ENCODE measurements at regions of chr10 and their contacts with region 1.

Region 1: DNA sequence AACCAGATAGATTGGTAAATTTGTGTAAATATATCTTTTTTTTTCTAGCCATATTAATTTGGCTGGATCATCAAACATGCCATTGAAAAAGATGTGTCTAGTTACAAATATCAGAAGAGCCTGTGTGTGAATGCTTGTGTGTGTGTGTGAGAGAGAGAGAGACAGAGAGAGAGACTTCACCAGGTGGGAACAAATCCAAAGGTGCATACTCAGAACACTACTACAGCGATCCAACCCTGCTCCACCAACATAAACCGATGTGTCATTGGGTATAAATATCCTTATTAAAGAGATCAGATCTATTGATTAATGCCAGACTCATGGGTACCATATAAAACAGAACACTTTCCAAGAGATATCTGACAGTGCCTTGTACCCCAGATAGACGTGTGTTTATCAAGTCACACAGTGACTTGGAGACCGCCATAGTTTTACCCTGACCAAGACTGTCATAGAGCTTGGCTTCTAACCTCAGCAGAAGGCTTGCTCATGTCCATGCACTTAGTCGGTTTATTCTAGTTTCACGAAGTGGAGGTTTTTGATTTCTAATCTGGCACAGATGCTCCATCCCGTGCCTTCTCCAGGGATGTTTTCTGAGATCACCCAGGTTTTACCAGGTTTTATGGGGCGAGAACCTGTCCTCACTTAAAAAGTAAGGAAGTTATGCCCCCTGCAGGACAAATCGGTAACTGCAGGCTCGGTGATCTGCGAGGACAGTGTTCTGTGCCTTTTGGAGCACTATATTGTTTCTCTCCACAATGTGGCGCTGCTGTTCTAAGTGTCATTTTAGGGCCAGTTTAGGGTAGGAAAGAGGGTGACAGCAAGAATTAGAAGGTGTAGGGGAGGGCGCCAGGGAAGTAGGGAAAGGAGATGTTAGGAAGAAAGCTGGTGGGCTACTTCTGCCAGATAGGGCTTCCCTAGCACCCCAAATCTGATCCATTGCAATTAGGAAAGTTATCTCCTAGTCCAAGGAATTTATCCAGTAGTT is 29.3 kb upstream of the WNT8B start:
- DNase-seq: peak; percentile 87
- H3K4me3 Mint-ChIP-seq: no peak overlapping the region
- H3K27ac Mint-ChIP-seq: no peak overlapping the region
- H3K4me1 Mint-ChIP-seq: peaks cover 12% of the 10 kb centered on the region
- H3K27me3 Mint-ChIP-seq: no peaks in the 10 kb centered on the region
- CTCF ChIP-seq: peak; percentile 86

Region 2: DNA sequence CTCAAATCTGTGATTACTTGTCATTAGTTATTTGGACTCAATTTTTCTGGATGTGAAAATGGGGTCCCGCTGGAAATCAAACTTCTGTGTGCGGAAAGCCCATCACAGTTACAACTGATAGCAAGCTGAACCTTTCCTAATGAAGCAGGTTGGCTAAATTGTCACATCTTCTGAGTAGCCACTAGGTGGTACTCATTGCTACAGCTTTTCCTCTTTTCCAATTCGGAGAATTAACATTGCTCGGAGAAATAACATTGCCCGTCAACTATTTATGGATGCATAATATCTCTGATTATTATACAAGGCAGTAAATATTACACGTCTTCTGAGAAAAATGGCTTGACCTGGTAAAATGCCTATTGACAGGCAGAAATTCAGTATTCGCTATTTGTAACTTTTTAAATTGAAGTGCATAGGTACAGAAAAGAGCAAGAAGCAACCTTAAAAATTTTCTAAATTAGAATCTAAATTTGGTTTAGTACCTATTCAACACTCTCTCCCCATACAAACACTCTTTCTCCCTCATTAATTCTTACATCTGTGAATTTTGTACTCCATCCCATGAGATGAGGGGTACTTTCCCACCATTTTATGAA is 129.7 kb before region 1 on chr10:
- CTCF ChIA-PET with region 1: no interaction called
- intact Hi-C with region 1: loop called (anchors 1 kb)
- DNase-seq: no peak
- H3K4me3 Mint-ChIP-seq: no peak overlapping the region
- H3K27ac Mint-ChIP-seq: no peak overlapping the region
- H3K4me1 Mint-ChIP-seq: peaks cover 8% of the 10 kb centered on the region
- H3K27me3 Mint-ChIP-seq: peaks cover 10% of the 10 kb centered on the region
- CTCF ChIP-seq: peak; percentile 42

Region 3: DNA sequence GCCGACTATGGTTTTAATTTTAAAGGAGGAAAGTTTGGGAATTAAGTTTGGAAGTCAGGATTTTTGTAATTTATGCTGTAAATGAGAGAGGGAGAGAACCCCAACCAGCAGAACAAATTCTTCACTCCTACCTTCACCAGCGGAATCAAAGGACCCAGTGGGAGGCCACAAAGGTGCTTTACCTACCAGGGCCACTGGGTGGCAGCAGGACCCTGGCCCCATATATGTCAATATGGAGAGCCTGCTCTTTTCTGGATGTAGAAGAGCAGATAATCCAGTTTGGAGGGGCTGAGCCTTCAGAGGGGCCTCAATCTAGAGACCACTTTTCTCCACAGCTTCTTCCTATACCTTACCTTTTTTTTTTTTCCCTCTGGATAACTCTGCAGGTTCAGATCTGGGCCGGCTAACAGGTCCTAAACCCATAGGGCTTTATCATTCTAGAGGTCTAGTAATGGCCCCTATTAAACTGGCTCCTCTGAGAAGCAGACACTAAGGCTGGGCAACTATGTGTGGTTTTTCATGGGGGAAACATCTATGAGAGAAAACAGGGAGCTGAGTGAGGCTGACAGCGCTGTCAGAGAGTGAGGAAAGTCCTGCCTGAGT is 95.0 kb before region 1 on chr10:
- CTCF ChIA-PET with region 1: interaction called, 6 read pairs
- intact Hi-C with region 1: loop called (anchors 1 kb)
- DNase-seq: peak; percentile 74
- H3K4me3 Mint-ChIP-seq: no peak overlapping the region
- H3K27ac Mint-ChIP-seq: no peak overlapping the region
- H3K4me1 Mint-ChIP-seq: peaks cover 9% of the 10 kb centered on the region
- H3K27me3 Mint-ChIP-seq: peaks cover 24% of the 10 kb centered on the region
- CTCF ChIP-seq: peak; percentile 71

Region 4: DNA sequence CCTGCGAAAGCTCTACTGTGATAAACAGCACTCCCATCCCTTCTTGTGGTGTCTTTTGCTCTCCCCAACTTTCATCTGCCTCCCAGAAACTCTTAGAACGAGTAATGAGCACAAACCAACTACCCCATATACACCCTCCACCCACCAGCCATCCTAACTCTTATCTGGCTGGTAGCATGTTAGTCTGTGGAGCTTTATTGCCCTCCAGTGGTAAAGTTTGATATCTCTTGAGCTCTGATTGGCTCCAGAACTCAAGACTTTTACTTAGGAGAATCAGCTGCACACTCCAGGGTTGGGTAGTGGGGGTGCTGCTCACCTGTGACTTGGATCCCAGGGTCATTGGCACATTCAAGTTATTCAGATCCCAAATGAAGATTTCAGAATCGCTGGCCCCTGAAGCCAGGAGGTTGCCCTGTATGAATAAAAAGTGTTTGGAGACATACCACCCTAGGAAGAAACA is 75.2 kb after region 1 on chr10:
- CTCF ChIA-PET with region 1: interaction called, 3 read pairs
- intact Hi-C with region 1: loop called (anchors 2 kb)
- DNase-seq: peak; percentile 27
- H3K4me3 Mint-ChIP-seq: no peak overlapping the region
- H3K27ac Mint-ChIP-seq: no peak overlapping the region
- H3K4me1 Mint-ChIP-seq: peaks cover 8% of the 10 kb centered on the region
- H3K27me3 Mint-ChIP-seq: no peaks in the 10 kb centered on the region
- CTCF ChIP-seq: peak; percentile 14

Region 5: GRCh38 chr10:100878291-100878910 is 444.9 kb after region 1 on chr10:
- CTCF ChIA-PET with region 1: no interaction called
- intact Hi-C with region 1: loop called (anchors 5 kb)
- DNase-seq: peak; percentile 41
- H3K4me3 Mint-ChIP-seq: no peak overlapping the region
- H3K27ac Mint-ChIP-seq: no peak overlapping the region
- H3K4me1 Mint-ChIP-seq: peaks cover 19% of the 10 kb centered on the region
- H3K27me3 Mint-ChIP-seq: peaks cover 54% of the 10 kb centered on the region
- CTCF ChIP-seq: peak; percentile 57